IMR-90 (cell line): ENCODE measurements at regions of chr2 and their contacts with region 1.

Region 1: GRCh38 chr2:111116843-111117597 is 3.7 kb upstream of the BCL2L11 start:
- DNase-seq: peak; percentile 71
- ATAC-seq: peak; percentile 60
- H3K4me3 ChIP-seq: peak overlapping the region; percentile 31
- H3K27ac ChIP-seq: no peak overlapping the region
- H3K4me1 ChIP-seq: peaks cover 2% of the 10 kb centered on the region
- H3K27me3 ChIP-seq: peaks cover 39% of the 10 kb centered on the region
- CTCF ChIP-seq: peak; percentile 92
- POLR2A ChIP-seq: peak; percentile 30; the same call in 1 of the 2 replicates
- RAD21 ChIP-seq: peak; percentile 93

Region 2: GRCh38 chr2:110812726-110813645 is 304.0 kb before region 1 on chr2:
- CTCF ChIA-PET with region 1: no interaction called
- POLR2A ChIA-PET with region 1: no interaction called
- dilution Hi-C with region 1: no loop called
- in situ Hi-C with region 1: no loop called
- intact Hi-C with region 1: loop called (anchors 2 kb)
- DNase-seq: no peak
- ATAC-seq: no peak
- H3K4me3 ChIP-seq: no peak overlapping the region
- H3K27ac ChIP-seq: no peak overlapping the region
- H3K4me1 ChIP-seq: no peaks in the 10 kb centered on the region
- H3K27me3 ChIP-seq: peaks cover 43% of the 10 kb centered on the region
- CTCF ChIP-seq: no peak
- POLR2A ChIP-seq: no peak
- RAD21 ChIP-seq: no peak

Region 3: GRCh38 chr2:111667542-111668273 is 550.7 kb after region 1 on chr2:
- CTCF ChIA-PET with region 1: no interaction called
- POLR2A ChIA-PET with region 1: no interaction called
- dilution Hi-C with region 1: no loop called
- in situ Hi-C with region 1: loop called (anchors 10 kb)
- intact Hi-C with region 1: loop called (anchors 1 kb)
- DNase-seq: peak; percentile 81
- ATAC-seq: peak; percentile 98
- H3K4me3 ChIP-seq: no peak overlapping the region
- H3K27ac ChIP-seq: no peak overlapping the region
- H3K4me1 ChIP-seq: peaks cover 9% of the 10 kb centered on the region; the same call in 1 of the 2 replicates
- H3K27me3 ChIP-seq: no peaks in the 10 kb centered on the region
- CTCF ChIP-seq: peak; percentile 83
- POLR2A ChIP-seq: 0 out of 2 replicates have a peak, but pooled peaks have one; percentile 27
- RAD21 ChIP-seq: peak; percentile 93

Region 4: GRCh38 chr2:111705711-111706336 is 588.8 kb after region 1 on chr2:
- CTCF ChIA-PET with region 1: interaction called, 6 read pairs
- POLR2A ChIA-PET with region 1: no interaction called
- dilution Hi-C with region 1: no loop called
- in situ Hi-C with region 1: loop called (anchors 5 kb)
- intact Hi-C with region 1: loop called (anchors 2 kb)
- DNase-seq: peak; percentile 97
- ATAC-seq: peak; percentile 56
- H3K4me3 ChIP-seq: no peak overlapping the region
- H3K27ac ChIP-seq: no peak overlapping the region
- H3K4me1 ChIP-seq: peaks cover 15% of the 10 kb centered on the region
- H3K27me3 ChIP-seq: peaks cover 35% of the 10 kb centered on the region
- CTCF ChIP-seq: no peak
- POLR2A ChIP-seq: no peak
- RAD21 ChIP-seq: no peak